H1 (cell line): ENCODE measurements at regions of chr16 and their contacts with region 1.

Region 1: GRCh38 chr16:81855552-81856153 is 76.6 kb downstream of the PLCG2 start:
- DNase-seq: no peak
- H3K4me3 ChIP-seq: no peak overlapping the region
- H3K27ac ChIP-seq: no peak overlapping the region
- H3K4me1 ChIP-seq: no peaks in the 10 kb centered on the region
- H3K27me3 ChIP-seq: no peaks in the 10 kb centered on the region
- CTCF ChIP-seq: peak; percentile 28 to 60 (median 49); a peak in 3 of 4 replicates
- EP300 ChIP-seq: no peak
- POLR2A ChIP-seq: no peak
- RAD21 ChIP-seq: peak; percentile 50 to 66

Region 2: GRCh38 chr16:81737885-81738786 is 117.5 kb before region 1 on chr16:
- CTCF ChIA-PET with region 1: interaction called, 13 read pairs
- POLR2A ChIA-PET with region 1: no interaction called
- DNase-seq: peak; percentile 73 to 92
- H3K4me3 ChIP-seq: 0 out of 8 replicates have a peak overlapping the region, but pooled peaks of 1 of the 4 experiments have one; percentile 30
- H3K27ac ChIP-seq: no peak overlapping the region
- H3K4me1 ChIP-seq: peaks cover 0 to 2% (median 0%) of the 10 kb centered on the region in 4 experiments; a peak in 3 of 7 replicates
- H3K27me3 ChIP-seq: no peaks in the 10 kb centered on the region
- CTCF ChIP-seq: peak; percentile 88 to 95 (median 89)
- EP300 ChIP-seq: peak in 1 of 2 experiments; percentile 71; a peak in 1 of 3 replicates
- POLR2A ChIP-seq: no peak
- RAD21 ChIP-seq: peak; percentile 96 to 98

Region 3: GRCh38 chr16:81803332-81803731 is 52.3 kb before region 1 on chr16:
- CTCF ChIA-PET with region 1: no interaction called
- POLR2A ChIA-PET with region 1: no interaction called
- DNase-seq: no peak
- H3K4me3 ChIP-seq: no peak overlapping the region
- H3K27ac ChIP-seq: no peak overlapping the region
- H3K4me1 ChIP-seq: peaks cover 0 to 4% (median 1%) of the 10 kb centered on the region in 4 experiments; a peak in 2 of 7 replicates
- H3K27me3 ChIP-seq: no peaks in the 10 kb centered on the region
- CTCF ChIP-seq: no peak
- EP300 ChIP-seq: no peak
- POLR2A ChIP-seq: no peak
- RAD21 ChIP-seq: no peak

Region 4: DNA sequence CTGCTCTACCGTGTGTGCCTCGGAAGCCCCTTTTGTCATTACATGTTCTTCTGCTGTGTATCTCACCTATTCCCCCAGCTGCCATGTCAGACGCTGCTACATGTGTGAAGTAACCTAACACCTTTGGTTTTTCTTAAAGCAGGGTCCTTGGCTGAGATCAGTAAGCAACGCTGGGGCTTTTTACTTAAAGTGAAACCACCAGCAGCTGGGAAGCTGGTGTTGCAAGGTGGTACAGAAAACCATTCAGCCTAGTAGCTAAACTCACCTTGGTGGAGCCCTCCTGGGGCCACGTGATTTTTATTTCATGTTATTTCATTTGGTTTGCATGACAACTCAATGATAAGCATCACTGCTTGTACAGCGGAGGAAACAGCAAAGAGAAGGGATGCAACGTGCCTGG is 13.9 kb before region 1 on chr16:
- CTCF ChIA-PET with region 1: interaction called, 30 read pairs
- POLR2A ChIA-PET with region 1: interaction called, 4 read pairs
- DNase-seq: no peak
- H3K4me3 ChIP-seq: no peak overlapping the region
- H3K27ac ChIP-seq: no peak overlapping the region
- H3K4me1 ChIP-seq: no peaks in the 10 kb centered on the region; a peak in 1 of 7 replicates
- H3K27me3 ChIP-seq: no peaks in the 10 kb centered on the region
- CTCF ChIP-seq: no peak
- EP300 ChIP-seq: no peak
- POLR2A ChIP-seq: no peak
- RAD21 ChIP-seq: no peak